PC-9 (cell line): ENCODE measurements at regions of chr16 and their contacts with region 1.

Region 1: DNA sequence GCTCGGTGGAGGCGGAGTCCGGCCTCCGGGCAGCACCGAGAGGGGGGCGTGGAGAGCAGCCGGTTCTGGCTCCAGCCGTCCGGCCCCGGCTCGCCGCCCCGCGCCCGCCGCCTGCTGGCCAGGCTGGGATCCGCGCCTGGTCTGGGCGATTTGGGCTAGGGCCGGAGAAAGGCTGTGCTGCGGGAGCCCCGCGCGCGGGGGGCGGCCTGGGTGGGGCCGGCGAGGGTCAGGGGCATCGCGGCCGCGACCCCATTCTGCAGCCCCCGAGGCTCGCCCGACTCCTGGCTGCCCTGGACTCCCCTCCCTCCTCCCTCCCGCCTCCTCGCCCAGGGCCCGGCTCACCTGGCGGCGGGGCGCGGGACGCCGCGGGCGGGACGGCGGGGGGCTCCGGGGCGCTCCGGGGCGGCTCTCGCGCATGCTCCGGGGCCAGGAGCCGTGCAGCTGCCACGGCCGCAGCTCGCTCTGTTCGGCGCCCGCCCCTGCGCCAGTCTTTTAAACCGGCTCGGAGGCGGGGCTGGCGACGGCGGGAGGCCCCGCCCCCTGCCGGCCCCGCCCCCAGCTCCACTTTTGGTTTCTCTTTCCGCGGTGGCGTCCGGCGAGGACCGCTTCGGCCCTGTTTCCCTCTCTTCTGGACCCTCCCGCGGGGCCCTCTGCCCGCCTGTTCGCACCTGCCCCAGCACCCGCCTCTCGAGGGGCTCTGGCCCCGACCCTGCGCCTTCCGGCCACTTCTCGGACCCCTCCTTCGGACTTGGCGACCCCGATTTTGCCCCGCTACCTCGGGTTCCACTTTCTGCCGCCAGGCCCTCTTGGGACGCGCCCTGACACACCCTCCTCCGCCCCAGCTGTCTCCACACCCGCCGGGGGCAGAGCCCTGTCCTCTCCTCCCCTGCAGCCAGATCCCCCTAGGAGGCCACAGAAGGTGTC is at the start of gene SOCS1:
- DNase-seq: peak; percentile 63 to 93
- H3K4me3 ChIP-seq: peak within 1 kb of the TSS; percentile 96
- H3K27ac ChIP-seq: peak within 1 kb of the TSS; percentile 69
- H3K4me1 ChIP-seq: peaks cover 23% of the 10 kb centered on the region
- H3K27me3 ChIP-seq: no peaks in the 10 kb centered on the region
- CTCF ChIP-seq: peak; percentile 81
- total RNA-seq, gene SOCS1: 4.6 and 6.7 TPM in 2 replicates

Region 2: GRCh38 chr16:10971560-10971961 is 284.4 kb before region 1 on chr16:
- CTCF ChIA-PET with region 1: interaction called, 10 read pairs
- POLR2A ChIA-PET with region 1: interaction called, 13 read pairs
- intact Hi-C with region 1: loop called (anchors 1 kb)
- DNase-seq: peak; percentile 80 to 82
- H3K4me3 ChIP-seq: no peak overlapping the region
- H3K27ac ChIP-seq: no peak overlapping the region
- H3K4me1 ChIP-seq: peaks cover 9% of the 10 kb centered on the region
- H3K27me3 ChIP-seq: no peaks in the 10 kb centered on the region
- CTCF ChIP-seq: peak; percentile 89

Region 3: GRCh38 chr16:11121914-11122692 is 133.9 kb before region 1 on chr16:
- CTCF ChIA-PET with region 1: no interaction called
- POLR2A ChIA-PET with region 1: interaction called, 23 read pairs
- intact Hi-C with region 1: no loop called
- DNase-seq: no peak
- H3K4me3 ChIP-seq: no peak overlapping the region
- H3K27ac ChIP-seq: no peak overlapping the region
- H3K4me1 ChIP-seq: no peaks in the 10 kb centered on the region
- H3K27me3 ChIP-seq: no peaks in the 10 kb centered on the region
- CTCF ChIP-seq: no peak

Region 4: GRCh38 chr16:11201498-11202259 is 54.3 kb before region 1 on chr16:
- CTCF ChIA-PET with region 1: interaction called, 4 read pairs
- POLR2A ChIA-PET with region 1: interaction called, 4 read pairs
- intact Hi-C with region 1: loop called (anchors 2 kb)
- DNase-seq: peak; percentile 89 to 94
- H3K4me3 ChIP-seq: peak overlapping the region; percentile 28; the same call in 1 of the 2 replicates
- H3K27ac ChIP-seq: peak overlapping the region; percentile 75
- H3K4me1 ChIP-seq: peaks cover 37% of the 10 kb centered on the region
- H3K27me3 ChIP-seq: no peaks in the 10 kb centered on the region
- CTCF ChIP-seq: no peak

Region 5: GRCh38 chr16:11312718-11313492 is 56.9 kb after region 1 on chr16:
- CTCF ChIA-PET with region 1: interaction called, 5 read pairs
- POLR2A ChIA-PET with region 1: interaction called, 10 read pairs
- intact Hi-C with region 1: loop called (anchors 1 kb)
- DNase-seq: peak; percentile 84 to 90
- H3K4me3 ChIP-seq: peak overlapping the region; percentile 37; the same call in 1 of the 2 replicates
- H3K27ac ChIP-seq: peak overlapping the region; percentile 73
- H3K4me1 ChIP-seq: peaks cover 29% of the 10 kb centered on the region
- H3K27me3 ChIP-seq: no peaks in the 10 kb centered on the region
- CTCF ChIP-seq: no peak

Region 6: GRCh38 chr16:11390918-11391495 is 135.0 kb after region 1 on chr16:
- CTCF ChIA-PET with region 1: no interaction called
- POLR2A ChIA-PET with region 1: interaction called, 4 read pairs
- intact Hi-C with region 1: loop called (anchors 1 kb)
- DNase-seq: peak in 1 of 2 experiments; percentile 38
- H3K4me3 ChIP-seq: no peak overlapping the region
- H3K27ac ChIP-seq: no peak overlapping the region
- H3K4me1 ChIP-seq: 0 out of 2 replicates have a peak, but pooled peaks cover 5% of the 10 kb centered on the region
- H3K27me3 ChIP-seq: no peaks in the 10 kb centered on the region
- CTCF ChIP-seq: no peak

Region 7: DNA sequence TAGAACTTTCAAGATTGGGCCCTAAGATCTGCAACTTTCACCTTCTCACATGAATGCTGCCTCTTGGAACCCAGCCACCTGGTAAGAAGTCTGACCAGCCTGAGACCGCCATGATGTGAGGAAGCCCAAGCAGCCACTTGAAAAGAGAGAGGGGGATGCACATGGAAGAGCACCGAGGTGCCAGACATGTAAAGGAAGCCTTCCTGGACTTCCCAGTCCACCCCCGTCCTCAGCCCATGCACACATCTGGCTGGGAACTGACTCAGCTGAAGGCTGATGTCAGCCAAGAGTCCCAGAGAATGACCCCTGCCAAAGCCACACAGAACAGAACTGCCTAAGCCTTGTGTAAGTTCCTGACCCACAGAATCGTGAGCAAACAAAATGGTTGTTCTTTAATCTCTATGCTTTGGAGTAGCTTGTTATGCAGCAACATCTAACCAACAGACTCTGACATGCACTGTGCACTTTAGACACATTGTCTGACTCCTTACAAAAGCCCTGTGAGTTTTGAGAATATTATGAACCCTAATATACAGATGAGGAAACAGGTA is 176.0 kb after region 1 on chr16:
- CTCF ChIA-PET with region 1: no interaction called
- POLR2A ChIA-PET with region 1: no interaction called
- intact Hi-C with region 1: no loop called
- DNase-seq: no peak
- H3K4me3 ChIP-seq: no peak overlapping the region
- H3K27ac ChIP-seq: no peak overlapping the region
- H3K4me1 ChIP-seq: no peaks in the 10 kb centered on the region
- H3K27me3 ChIP-seq: peaks cover 14% of the 10 kb centered on the region
- CTCF ChIP-seq: no peak